Heart right ventricle (tissue), 16 donors: ENCODE measurements at regions of chr2 and their contacts with region 1.

Region 1: GRCh38 chr2:102366406-102367112 is 11.0 kb downstream of the IL18R1 start:
- DNase-seq: no peak
- ATAC-seq: no peak
- H3K4me3 ChIP-seq: no peak overlapping the region
- H3K27ac ChIP-seq: peak overlapping the region in 1 of 10 donors; percentile 48
- H3K4me1 ChIP-seq: peaks cover 0 to 5% (median 0%) of the 10 kb centered on the region in 9 donors
- H3K27me3 ChIP-seq: no peaks in the 10 kb centered on the region
- CTCF ChIP-seq: no peak

Region 2: DNA sequence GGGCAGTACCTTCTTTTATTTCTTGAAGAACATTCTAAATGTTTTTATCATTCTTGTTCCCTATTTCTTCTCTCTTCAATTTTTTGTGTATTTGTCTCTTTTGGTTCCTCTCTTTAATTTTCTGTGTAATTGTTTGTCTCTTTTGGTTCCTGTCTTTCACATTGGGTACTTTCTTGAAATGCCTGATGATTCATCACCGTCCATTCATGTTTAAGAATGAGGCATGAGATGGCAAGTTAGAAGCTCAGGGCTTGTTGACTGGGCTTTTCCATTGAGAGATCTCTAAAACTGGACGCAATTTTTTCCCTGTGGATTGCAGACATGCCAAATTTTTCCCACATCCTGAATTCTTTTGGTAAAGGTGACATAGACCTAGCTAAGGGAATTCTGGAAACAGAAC is 408.5 kb before region 1 on chr2:
- intact Hi-C with region 1: no loop called
- DNase-seq: no peak
- ATAC-seq: no peak
- H3K4me3 ChIP-seq: no peak overlapping the region
- H3K27ac ChIP-seq: peak overlapping the region in 3 of 10 donors; percentile 17 to 93 (median 27)
- H3K4me1 ChIP-seq: peaks cover 0 to 55% (median 10%) of the 10 kb centered on the region in 9 donors
- H3K27me3 ChIP-seq: no peaks in the 10 kb centered on the region
- CTCF ChIP-seq: no peak

Region 3: DNA sequence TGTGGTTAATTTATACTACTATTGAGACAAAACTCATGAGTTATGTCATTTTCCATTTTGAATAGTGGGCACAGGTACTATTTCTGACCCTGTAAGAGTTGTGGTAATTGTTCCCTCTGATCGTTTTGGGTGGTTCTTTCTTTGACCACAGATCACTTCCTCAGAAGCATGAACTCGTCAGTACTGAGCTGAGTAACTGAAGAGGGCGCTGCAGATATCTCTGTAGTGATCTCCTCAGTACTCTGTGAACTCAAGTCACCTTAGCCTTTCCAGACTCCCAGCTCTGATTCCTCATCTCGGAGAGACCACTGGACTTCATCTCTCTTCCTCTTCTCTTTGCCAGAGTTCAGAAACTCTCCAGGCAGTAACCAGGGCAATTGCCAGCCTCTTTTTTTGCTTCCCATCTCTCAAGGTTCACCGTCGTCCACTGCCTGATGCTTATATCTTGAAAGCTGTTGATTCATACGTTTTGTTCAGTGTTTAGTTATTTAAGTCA is 64.6 kb before region 1 on chr2:
- intact Hi-C with region 1: loop called in 1 of 10 experiments (anchors 10 kb)
- DNase-seq: peak in 1 of 2 donors; percentile 18
- ATAC-seq: peak; percentile 38 to 74 (median 54)
- H3K4me3 ChIP-seq: no peak overlapping the region
- H3K27ac ChIP-seq: no peak overlapping the region
- H3K4me1 ChIP-seq: peaks cover 0 to 22% (median 0%) of the 10 kb centered on the region in 9 donors
- H3K27me3 ChIP-seq: peaks cover 0 to 85% (median 10%) of the 10 kb centered on the region in 7 donors
- CTCF ChIP-seq: peak in 4 of 9 donors; percentile 28 to 55 (median 37)

Region 4: GRCh38 chr2:102401456-102401855 is 34.9 kb after region 1 on chr2:
- intact Hi-C with region 1: no loop called
- DNase-seq: no peak
- ATAC-seq: no peak
- H3K4me3 ChIP-seq: no peak overlapping the region
- H3K27ac ChIP-seq: no peak overlapping the region
- H3K4me1 ChIP-seq: peaks cover 0 to 5% (median 0%) of the 10 kb centered on the region in 9 donors
- H3K27me3 ChIP-seq: no peaks in the 10 kb centered on the region
- CTCF ChIP-seq: no peak

Region 5: DNA sequence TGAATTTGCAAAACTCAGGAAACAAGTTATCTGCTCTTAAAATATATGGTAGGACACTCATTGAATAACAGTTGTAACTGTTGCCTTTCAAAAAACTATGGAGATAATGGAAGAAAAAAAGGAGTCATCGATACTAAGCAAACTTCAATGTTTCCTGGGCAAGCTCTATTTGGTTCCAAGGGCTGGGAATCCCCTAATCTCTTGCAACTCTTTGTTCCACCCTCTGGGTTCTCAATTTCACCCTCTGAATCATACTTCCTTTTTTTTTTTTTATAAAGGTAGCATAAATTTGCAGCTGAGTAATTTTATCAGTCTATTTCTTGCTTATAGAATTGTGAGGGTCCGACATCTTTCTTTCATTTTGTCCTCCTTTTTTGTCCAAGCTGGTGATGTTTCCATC is 143.2 kb after region 1 on chr2:
- intact Hi-C with region 1: no loop called
- DNase-seq: no peak
- ATAC-seq: no peak
- H3K4me3 ChIP-seq: no peak overlapping the region
- H3K27ac ChIP-seq: no peak overlapping the region
- H3K4me1 ChIP-seq: peaks cover 0 to 7% (median 0%) of the 10 kb centered on the region in 9 donors
- H3K27me3 ChIP-seq: peaks cover 0 to 6% (median 0%) of the 10 kb centered on the region in 7 donors
- CTCF ChIP-seq: no peak

Region 6: DNA sequence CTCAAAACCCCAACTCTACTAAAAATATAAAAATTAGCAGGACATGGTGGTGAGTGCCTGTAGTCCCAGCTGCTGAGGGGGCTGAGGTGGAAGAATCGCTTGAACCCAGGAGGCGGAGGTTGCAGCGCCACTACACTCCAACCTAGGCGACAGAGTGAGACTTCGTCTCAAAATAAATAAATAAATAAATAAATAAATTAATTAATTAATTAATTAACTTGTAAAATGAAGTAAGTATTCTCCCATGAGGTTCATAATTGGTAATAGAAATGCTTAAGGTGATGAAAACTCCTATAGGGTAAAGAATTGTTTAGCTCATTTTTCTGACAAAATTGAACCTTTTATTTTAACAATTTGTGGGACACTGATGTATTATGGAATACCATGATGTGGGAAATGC is 626.0 kb after region 1 on chr2:
- intact Hi-C with region 1: no loop called
- DNase-seq: no peak
- ATAC-seq: no peak
- H3K4me3 ChIP-seq: no peak overlapping the region
- H3K27ac ChIP-seq: no peak overlapping the region
- H3K4me1 ChIP-seq: no peaks in the 10 kb centered on the region
- H3K27me3 ChIP-seq: no peaks in the 10 kb centered on the region
- CTCF ChIP-seq: no peak